RWPE1 (cell line): ENCODE measurements at regions of chr6 and their contacts with region 1.

Region 1: DNA sequence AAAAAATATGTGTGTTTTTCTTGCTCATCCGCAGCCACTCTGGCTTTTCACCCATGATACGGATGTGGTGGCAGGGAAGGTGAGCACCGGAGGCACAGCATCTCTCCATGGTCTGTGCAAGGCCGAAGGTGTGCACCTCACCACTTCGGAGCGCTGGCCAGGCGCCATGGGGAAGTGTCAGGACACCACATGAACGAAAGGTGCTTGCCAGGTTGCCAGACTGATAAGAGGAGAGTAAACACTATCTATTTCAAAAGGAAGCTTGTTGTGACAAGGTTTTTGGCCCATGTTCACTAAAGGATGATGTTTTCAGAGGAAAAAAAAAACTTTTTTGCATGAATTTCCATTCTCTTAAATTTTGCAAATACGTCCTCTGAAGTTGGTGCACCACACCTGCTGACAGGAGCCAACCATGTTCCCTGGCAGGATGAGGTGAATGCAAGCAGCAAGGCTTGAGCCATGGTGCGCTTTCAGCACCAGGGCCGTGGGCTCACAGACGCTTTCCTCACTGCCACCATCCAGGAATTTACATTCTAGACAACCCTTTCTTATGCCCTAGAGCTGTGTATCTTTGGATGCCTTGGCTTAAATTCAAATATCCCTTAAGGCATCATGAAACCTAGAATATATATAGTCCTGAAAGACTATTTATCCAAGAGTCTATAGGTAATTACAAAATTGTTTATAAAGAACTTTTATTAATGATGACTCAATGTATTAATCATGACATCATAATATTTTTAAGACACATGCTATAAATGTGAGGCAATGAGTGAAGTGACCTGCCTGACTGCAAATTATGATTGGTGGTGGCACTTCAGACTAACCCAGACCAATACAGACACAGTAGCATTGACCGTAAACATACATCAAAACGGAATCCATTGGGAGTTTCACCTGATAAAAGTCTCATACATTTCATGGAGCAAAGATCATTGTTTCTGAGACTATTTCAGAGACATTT is 234.5 kb downstream of the TFAP2A start:
- DNase-seq: no peak
- H3K27ac ChIP-seq: no peak overlapping the region
- CTCF ChIP-seq: no peak

Region 2: DNA sequence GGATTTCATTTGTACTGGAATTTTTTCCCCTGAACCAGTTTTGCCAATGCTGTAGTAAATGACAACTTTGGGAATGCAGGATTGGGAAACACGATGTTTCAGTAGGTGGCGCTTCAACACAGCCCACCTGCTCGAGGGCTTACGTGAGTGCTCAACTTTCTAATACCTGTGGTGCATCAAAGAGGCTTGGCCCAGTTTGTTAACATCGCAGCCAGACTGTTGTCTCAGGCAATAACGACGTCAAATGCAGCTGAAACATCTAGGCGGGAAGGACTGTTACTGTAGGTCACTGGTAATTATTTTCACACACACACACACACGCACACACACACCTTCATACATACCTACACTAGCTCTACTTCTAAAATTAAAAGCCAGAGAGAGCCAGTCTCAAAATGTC is 929.6 kb before region 1 on chr6:
- CTCF ChIA-PET with region 1: interaction called, 13 read pairs
- POLR2A ChIA-PET with region 1: no interaction called
- DNase-seq: peak; percentile 41
- H3K27ac ChIP-seq: no peak overlapping the region
- CTCF ChIP-seq: peak; percentile 74

Region 3: GRCh38 chr6:10297832-10298231 is 117.4 kb after region 1 on chr6:
- CTCF ChIA-PET with region 1: no interaction called
- POLR2A ChIA-PET with region 1: no interaction called
- DNase-seq: no peak
- H3K27ac ChIP-seq: no peak overlapping the region
- CTCF ChIP-seq: no peak